Dendritic cell treated with granulocyte-macrophage colony-stimulating factor and Interleukin-4, amounts not matched to agents 40 ng/mL and 50 ng/mL, for 4 days (primary cell): ENCODE measurements at regions of chr4 and their contacts with region 1.

Region 1: DNA sequence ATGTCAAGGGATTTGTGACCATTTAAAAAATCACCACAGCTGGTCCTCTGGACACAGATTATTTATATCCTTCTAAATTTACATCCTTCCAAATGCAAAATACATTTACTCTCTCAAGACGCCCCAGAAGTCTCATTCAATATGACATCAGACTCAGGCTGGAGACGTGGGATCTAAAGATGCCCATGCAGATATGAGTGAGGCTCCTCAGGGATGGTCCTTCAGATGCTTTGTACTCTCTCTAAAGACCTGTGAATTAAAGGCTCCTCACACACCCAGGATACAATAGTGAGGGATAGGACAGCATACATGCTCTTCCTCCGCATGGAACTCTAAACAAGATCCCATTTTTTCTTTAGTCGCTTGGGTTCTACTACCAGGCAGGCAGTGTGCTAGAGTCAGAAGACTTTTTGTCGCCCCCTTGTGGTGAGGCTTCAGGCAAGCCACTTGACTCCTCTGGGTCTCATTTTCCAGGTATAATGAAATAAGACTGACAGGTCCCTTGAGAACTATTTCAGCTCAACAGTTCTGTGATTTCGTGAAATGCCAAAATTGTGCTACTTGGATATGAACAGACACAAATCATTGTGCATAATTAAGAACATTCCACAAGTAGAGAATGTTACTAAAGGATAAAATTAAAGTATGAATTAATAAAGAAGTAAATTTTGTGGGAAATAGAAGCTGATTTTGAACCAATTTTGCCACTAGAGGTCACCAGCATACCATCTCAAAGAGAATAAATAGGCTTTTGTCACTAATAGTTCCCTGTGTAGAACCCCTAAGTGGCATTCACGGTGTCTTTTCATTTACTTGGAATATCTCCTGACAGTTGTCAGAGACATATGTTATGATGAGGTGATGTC is 13.7 kb upstream of the SCOC start:
- H3K4me3 Mint-ChIP-seq: no peak overlapping the region
- H3K27ac Mint-ChIP-seq: no peak overlapping the region
- H3K4me1 Mint-ChIP-seq: no peaks in the 10 kb centered on the region
- H3K27me3 Mint-ChIP-seq: no peaks in the 10 kb centered on the region

Region 2: GRCh38 chr4:140315970-140316369 is 43.8 kb before region 1 on chr4:
- intact Hi-C with region 1: no loop called
- H3K4me3 Mint-ChIP-seq: no peak overlapping the region
- H3K27ac Mint-ChIP-seq: no peak overlapping the region
- H3K4me1 Mint-ChIP-seq: no peaks in the 10 kb centered on the region
- H3K27me3 Mint-ChIP-seq: no peaks in the 10 kb centered on the region

Region 3: DNA sequence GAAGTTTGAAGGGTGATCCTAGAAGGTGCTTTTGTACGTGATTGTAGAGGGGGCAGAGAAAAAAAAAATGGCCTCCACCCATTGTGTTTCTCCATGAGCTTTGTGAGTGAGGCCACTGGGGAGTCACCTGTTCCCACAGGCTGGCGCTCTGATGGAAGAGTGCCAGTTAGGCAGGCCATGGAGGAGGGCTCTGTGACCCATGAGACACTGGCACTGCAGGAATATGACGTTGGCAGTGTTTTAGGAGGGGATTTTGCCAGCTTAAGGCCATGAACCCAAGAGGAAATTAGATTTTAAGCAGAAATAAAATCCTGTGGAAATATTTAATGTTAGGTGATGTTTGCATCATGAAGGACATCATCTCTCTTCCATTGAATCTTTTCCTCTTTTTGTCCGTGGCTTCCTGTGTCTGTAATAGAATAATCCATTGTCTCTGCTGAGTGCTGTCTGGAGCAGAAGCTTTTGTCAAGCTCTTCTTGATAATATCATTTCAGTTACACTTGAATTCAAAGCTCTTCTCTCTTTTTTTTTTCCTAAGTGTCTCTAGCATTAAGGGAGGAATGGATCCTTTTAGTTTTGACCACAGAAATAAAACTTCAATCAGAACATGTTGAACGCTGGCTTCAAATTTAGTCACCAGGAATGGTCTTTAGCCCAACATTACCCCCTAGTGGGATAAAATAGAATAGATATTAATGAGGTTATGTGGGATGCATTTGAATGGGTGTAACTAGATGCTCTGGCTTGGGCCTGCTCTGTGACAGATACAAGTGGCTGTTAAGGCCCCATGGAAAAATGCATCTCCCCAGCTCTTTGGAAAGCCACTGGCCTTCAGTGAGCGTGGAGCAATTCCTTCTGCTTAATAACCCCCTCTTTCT is 250.0 kb after region 1 on chr4:
- intact Hi-C with region 1: loop called (anchors 5 kb)
- H3K4me3 Mint-ChIP-seq: no peak overlapping the region
- H3K27ac Mint-ChIP-seq: no peak overlapping the region
- H3K4me1 Mint-ChIP-seq: peaks cover 6% of the 10 kb centered on the region
- H3K27me3 Mint-ChIP-seq: peaks cover 4% of the 10 kb centered on the region

Region 4: GRCh38 chr4:140884431-140885058 is 524.8 kb after region 1 on chr4:
- intact Hi-C with region 1: loop called (anchors 10 kb)
- H3K4me3 Mint-ChIP-seq: no peak overlapping the region
- H3K27ac Mint-ChIP-seq: no peak overlapping the region
- H3K4me1 Mint-ChIP-seq: no peaks in the 10 kb centered on the region
- H3K27me3 Mint-ChIP-seq: no peaks in the 10 kb centered on the region